ENCODE measurements at regions of chr10 and their contacts with region 1.

Region 1: GRCh38 chr10:110698782-110699201 is 54.7 kb downstream of the RBM20 start:
- DNase-seq: peak in 4 of 5 donors; percentile 56 to 83 (median 76)
- ATAC-seq: peak; percentile 61 to 91 (median 80)
- H3K4me3 ChIP-seq: no peak overlapping the region
- H3K27ac ChIP-seq: peak overlapping the region; percentile 67 to 94 (median 81)
- H3K4me1 ChIP-seq: peaks cover 0 to 82% (median 25%) of the 10 kb centered on the region in 12 donors
- H3K27me3 ChIP-seq: no peaks in the 10 kb centered on the region
- CTCF ChIP-seq: no peak
- POLR2A ChIP-seq: no peak

Region 2: GRCh38 chr10:110758898-110759297 is 60.1 kb after region 1 on chr10:
- intact Hi-C with region 1: no loop called
- DNase-seq: peak in 3 of 5 donors; percentile 50 to 68 (median 54)
- ATAC-seq: peak in 3 of 4 donors; percentile 42 to 55 (median 44)
- H3K4me3 ChIP-seq: no peak overlapping the region
- H3K27ac ChIP-seq: peak overlapping the region; percentile 34 to 96 (median 82)
- H3K4me1 ChIP-seq: peaks cover 11 to 94% (median 55%) of the 10 kb centered on the region in 12 donors
- H3K27me3 ChIP-seq: no peaks in the 10 kb centered on the region
- CTCF ChIP-seq: no peak
- POLR2A ChIP-seq: no peak

Region 3: GRCh38 chr10:110783509-110784107 is 84.8 kb after region 1 on chr10:
- intact Hi-C with region 1: loop called in 1 of 10 experiments (anchors 5 kb)
- DNase-seq: no peak
- ATAC-seq: no peak
- H3K4me3 ChIP-seq: no peak overlapping the region
- H3K27ac ChIP-seq: peak overlapping the region in 10 of 12 donors; percentile 3 to 80 (median 58)
- H3K4me1 ChIP-seq: peaks cover 3 to 93% (median 30%) of the 10 kb centered on the region in 12 donors
- H3K27me3 ChIP-seq: no peaks in the 10 kb centered on the region
- CTCF ChIP-seq: no peak
- POLR2A ChIP-seq: no peak

Region 4: GRCh38 chr10:110918643-110919363 is 220.0 kb after region 1 on chr10 and contains the start of gene BBIP1:
- intact Hi-C with region 1: no loop called
- DNase-seq: no peak
- ATAC-seq: peak; percentile 96 to 97 (median 97)
- H3K4me3 ChIP-seq: peak within 1 kb of the TSS; percentile 62 to 90 (median 76)
- H3K27ac ChIP-seq: peak within 1 kb of the TSS; percentile 94 to 100 (median 99)
- H3K4me1 ChIP-seq: peaks cover 2 to 47% (median 39%) of the 10 kb centered on the region in 12 donors
- H3K27me3 ChIP-seq: no peaks in the 10 kb centered on the region
- CTCF ChIP-seq: peak in 4 of 12 donors; percentile 8 to 36 (median 16)
- POLR2A ChIP-seq: peak in 1 of 2 donors; percentile 66
- total RNA-seq, gene BBIP1: 19.3 to 32.4 (median 25.2) TPM